PC-9 (cell line): ENCODE measurements at regions of chr14 and their contacts with region 1.

Region 1: GRCh38 chr14:67952786-67953185 is 133.2 kb downstream of the RAD51B start:
- DNase-seq: no peak
- H3K4me3 ChIP-seq: no peak overlapping the region
- H3K27ac ChIP-seq: no peak overlapping the region
- H3K4me1 ChIP-seq: no peaks in the 10 kb centered on the region
- H3K27me3 ChIP-seq: no peaks in the 10 kb centered on the region
- CTCF ChIP-seq: no peak

Region 2: GRCh38 chr14:67446120-67447032 is 506.4 kb before region 1 on chr14:
- CTCF ChIA-PET with region 1: no interaction called
- POLR2A ChIA-PET with region 1: no interaction called
- intact Hi-C with region 1: no loop called
- DNase-seq: no peak
- H3K4me3 ChIP-seq: no peak overlapping the region
- H3K27ac ChIP-seq: no peak overlapping the region
- H3K4me1 ChIP-seq: peaks cover 12% of the 10 kb centered on the region
- H3K27me3 ChIP-seq: no peaks in the 10 kb centered on the region
- CTCF ChIP-seq: no peak

Region 3: DNA sequence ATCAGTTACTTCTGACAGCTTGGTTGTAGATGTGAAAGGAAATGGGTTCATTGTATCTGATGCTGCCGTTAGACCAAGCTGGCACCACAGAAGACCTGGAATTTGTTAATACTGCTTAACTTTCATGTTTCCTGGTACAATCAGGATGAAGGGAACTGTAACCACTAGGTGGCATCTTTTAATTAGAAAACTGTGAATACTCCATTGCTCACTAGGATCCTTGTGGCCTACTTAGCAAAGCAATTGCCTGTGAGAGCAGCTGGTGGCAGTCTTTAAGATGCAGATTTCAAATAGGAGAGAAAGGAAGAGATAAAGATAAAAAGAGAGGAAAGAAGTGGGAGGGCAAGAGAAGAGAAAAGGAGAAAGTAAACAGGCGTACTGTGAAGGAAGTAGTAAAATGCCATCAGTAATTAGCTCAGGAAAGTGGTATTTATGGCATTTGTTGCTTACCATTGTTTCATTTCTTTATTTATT is 18.7 kb before region 1 on chr14:
- CTCF ChIA-PET with region 1: no interaction called
- POLR2A ChIA-PET with region 1: no interaction called
- intact Hi-C with region 1: no loop called
- DNase-seq: peak in 1 of 2 experiments; percentile 64
- H3K4me3 ChIP-seq: no peak overlapping the region
- H3K27ac ChIP-seq: no peak overlapping the region
- H3K4me1 ChIP-seq: 0 out of 2 replicates have a peak, but pooled peaks cover 7% of the 10 kb centered on the region
- H3K27me3 ChIP-seq: no peaks in the 10 kb centered on the region
- CTCF ChIP-seq: peak; percentile 79

Region 4: GRCh38 chr14:68011406-68012028 is 58.7 kb after region 1 on chr14:
- CTCF ChIA-PET with region 1: no interaction called
- POLR2A ChIA-PET with region 1: no interaction called
- intact Hi-C with region 1: no loop called
- DNase-seq: no peak
- H3K4me3 ChIP-seq: no peak overlapping the region
- H3K27ac ChIP-seq: no peak overlapping the region
- H3K4me1 ChIP-seq: no peaks in the 10 kb centered on the region
- H3K27me3 ChIP-seq: no peaks in the 10 kb centered on the region
- CTCF ChIP-seq: no peak

Region 5: DNA sequence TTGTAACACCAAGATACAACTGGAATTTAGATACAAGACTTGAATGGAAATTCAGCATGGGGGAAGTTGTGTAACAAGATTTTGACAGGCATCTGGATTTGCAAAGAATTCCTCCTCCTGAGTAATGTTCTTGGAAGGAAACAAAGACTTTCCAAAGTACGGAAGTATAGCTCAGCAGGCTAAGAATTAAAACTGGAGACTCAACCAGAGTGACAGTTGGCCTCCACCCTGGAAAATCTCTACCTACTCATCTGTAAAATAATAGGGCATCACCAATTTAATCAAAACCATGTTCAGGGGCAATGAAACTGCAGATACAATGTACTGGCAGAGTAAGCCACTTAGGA is 1185.4 kb after region 1 on chr14:
- CTCF ChIA-PET with region 1: no interaction called
- POLR2A ChIA-PET with region 1: interaction called, 14 read pairs
- intact Hi-C with region 1: no loop called
- DNase-seq: no peak
- H3K4me3 ChIP-seq: no peak overlapping the region
- H3K27ac ChIP-seq: no peak overlapping the region
- H3K4me1 ChIP-seq: peaks cover 15% of the 10 kb centered on the region
- H3K27me3 ChIP-seq: no peaks in the 10 kb centered on the region
- CTCF ChIP-seq: no peak